Activated CD4-positive, alpha-beta memory T cell treated with anti-CD3 and anti-CD28 coated beads for 36 hours (primary cell): ENCODE measurements at regions of chr1 and their contacts with region 1.

Region 1: GRCh38 chr1:207885129-207886032 is 25.5 kb downstream of the CD34 start:
- DNase-seq: peak; percentile 83
- H3K4me3 Mint-ChIP-seq: no peak overlapping the region
- H3K27ac Mint-ChIP-seq: peak overlapping the region; percentile 90
- H3K4me1 Mint-ChIP-seq: peaks cover 30% of the 10 kb centered on the region
- H3K27me3 Mint-ChIP-seq: peaks cover 3% of the 10 kb centered on the region

Region 2: DNA sequence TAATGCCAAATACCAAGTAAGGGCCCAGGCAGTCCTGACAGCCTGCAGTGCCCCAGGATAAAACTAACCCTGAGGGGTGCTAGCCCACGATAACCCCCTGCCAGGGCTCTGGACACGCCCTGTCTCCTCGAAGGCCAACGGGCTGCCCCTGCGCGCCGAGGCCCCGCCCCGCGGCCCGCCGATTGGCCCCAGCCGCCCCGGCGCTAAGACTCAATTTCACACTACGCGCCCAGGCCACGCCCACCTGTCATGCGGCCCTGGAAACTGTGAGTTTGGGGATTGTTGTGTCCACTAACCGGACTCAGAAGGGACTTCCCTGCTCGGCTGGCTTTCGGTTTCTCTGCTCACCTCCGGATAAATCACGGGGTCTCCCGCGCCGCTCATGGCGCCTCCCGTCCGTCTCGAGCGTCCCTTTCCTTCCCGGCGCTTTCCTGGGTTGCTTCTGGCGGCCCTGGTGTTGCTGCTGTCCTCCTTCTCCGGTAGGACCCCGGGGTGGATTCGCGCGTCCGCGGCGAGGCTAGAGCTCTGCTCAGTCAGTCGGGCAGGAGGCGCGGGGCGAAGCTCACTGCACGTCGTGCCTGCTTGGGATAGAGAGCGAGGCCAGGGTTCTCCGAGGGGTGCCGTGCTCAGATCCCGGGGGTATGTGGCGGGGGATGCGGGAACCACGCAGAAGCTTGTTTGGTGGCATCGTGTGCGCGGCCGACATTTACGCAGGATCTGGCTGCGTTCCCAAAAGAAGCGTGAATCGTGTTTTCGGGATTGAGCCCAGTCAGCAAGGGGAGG is 240.3 kb before region 1 on chr1 and contains the start of gene CR1L:
- CTCF ChIA-PET with region 1: no interaction called
- POLR2A ChIA-PET with region 1: no interaction called
- intact Hi-C with region 1: no loop called
- DNase-seq: peak; percentile 86
- H3K4me3 Mint-ChIP-seq: peak within 1 kb of the TSS; percentile 62
- H3K27ac Mint-ChIP-seq: no peak within 1 kb of the TSS
- H3K4me1 Mint-ChIP-seq: peaks cover 7% of the 10 kb centered on the region
- H3K27me3 Mint-ChIP-seq: peaks cover 14% of the 10 kb centered on the region
- total RNA-seq, gene CR1L: not detected

Region 3: DNA sequence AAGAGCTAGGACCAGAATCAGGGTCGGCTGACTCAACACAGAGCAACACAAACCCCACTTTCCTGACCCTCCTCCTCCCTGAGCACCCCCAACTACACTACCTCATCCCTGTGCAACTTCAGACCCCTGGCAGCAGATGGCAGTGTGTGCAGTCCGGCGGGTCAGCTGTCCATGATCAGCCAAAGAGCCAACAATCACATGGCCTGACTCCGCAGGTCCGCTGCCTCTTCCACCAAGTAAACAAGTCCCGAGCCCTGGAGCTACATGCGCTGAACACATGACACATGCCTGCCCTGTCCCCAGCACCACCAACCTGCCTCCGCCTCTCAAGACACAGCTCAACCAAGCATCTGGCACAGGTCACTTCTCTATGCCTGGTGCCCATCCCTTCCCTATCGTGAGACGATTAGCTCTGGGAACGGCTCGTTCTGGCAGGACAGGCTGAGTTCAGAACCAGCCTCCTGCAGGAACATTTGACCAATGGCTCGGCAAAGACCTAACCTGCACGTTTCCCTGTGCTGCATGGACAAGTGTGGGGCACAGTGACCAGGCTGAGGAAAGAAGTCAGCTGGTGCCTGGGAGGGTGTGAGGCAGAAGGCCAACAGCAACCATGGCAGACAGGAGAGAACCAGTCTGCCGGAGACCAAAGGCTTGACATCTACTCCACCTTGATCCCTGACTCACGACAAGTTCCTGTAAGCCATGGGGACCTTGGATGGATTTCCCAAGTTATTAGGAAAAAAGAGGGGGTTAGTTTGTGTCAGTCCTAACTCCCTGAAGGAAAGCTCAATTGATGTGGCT is 73.3 kb before region 1 on chr1:
- CTCF ChIA-PET with region 1: interaction called, 15 read pairs
- POLR2A ChIA-PET with region 1: no interaction called
- intact Hi-C with region 1: no loop called
- DNase-seq: no peak
- H3K4me3 Mint-ChIP-seq: no peak overlapping the region
- H3K27ac Mint-ChIP-seq: peak overlapping the region; percentile 74
- H3K4me1 Mint-ChIP-seq: peaks cover 86% of the 10 kb centered on the region
- H3K27me3 Mint-ChIP-seq: no peaks in the 10 kb centered on the region

Region 4: DNA sequence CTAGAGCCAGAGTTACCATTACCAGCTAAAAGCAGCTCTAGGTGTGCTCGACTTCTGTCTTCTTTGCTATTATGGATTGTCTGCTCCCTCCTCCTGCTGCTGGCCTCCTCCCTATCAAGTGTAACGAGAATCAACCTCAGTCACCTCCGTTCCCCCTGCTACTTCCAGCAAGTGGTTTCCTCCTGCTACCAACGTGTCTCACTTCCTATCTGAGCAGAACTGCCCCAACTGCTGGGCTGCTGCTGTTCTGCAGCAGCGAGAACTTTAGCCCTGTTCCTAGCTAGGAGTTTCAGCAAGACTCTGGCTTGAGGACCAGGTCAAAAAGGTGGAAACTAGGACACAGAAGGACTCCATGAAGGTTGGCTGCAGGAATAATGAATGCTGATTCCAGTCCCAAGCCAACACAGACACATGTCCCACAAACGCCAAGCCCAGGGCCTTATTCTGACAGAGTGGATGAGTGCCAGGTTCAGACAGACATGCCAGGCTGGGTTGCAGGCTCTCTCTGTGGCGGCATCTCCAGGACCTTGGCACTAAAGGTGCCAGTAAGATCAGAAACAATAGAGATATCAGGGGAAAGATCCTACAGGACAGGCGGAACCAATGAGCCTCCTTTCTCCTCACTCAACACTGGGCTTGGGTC is 21.4 kb before region 1 on chr1:
- CTCF ChIA-PET with region 1: interaction called, 220 read pairs
- POLR2A ChIA-PET with region 1: interaction called, 16 read pairs
- intact Hi-C with region 1: loop called (anchors 2 kb)
- DNase-seq: peak; percentile 68
- H3K4me3 Mint-ChIP-seq: peak overlapping the region; percentile 6
- H3K27ac Mint-ChIP-seq: peak overlapping the region; percentile 83
- H3K4me1 Mint-ChIP-seq: peaks cover 64% of the 10 kb centered on the region
- H3K27me3 Mint-ChIP-seq: no peaks in the 10 kb centered on the region

Region 5: GRCh38 chr1:207903767-207904166 is 18.4 kb after region 1 on chr1:
- CTCF ChIA-PET with region 1: interaction called, 11 read pairs
- POLR2A ChIA-PET with region 1: no interaction called
- intact Hi-C with region 1: no loop called
- DNase-seq: no peak
- H3K4me3 Mint-ChIP-seq: no peak overlapping the region
- H3K27ac Mint-ChIP-seq: no peak overlapping the region
- H3K4me1 Mint-ChIP-seq: peaks cover 8% of the 10 kb centered on the region
- H3K27me3 Mint-ChIP-seq: peaks cover under 1% of the 10 kb centered on the region

Region 6: GRCh38 chr1:207952617-207953542 is 67.5 kb after region 1 on chr1:
- CTCF ChIA-PET with region 1: interaction called, 255 read pairs
- POLR2A ChIA-PET with region 1: no interaction called
- intact Hi-C with region 1: no loop called
- DNase-seq: no peak
- H3K4me3 Mint-ChIP-seq: no peak overlapping the region
- H3K27ac Mint-ChIP-seq: no peak overlapping the region
- H3K4me1 Mint-ChIP-seq: no peaks in the 10 kb centered on the region
- H3K27me3 Mint-ChIP-seq: peaks cover 29% of the 10 kb centered on the region

Region 7: GRCh38 chr1:208085655-208086515 is 200.5 kb after region 1 on chr1:
- CTCF ChIA-PET with region 1: interaction called, 3 read pairs
- POLR2A ChIA-PET with region 1: no interaction called
- intact Hi-C with region 1: loop called (anchors 2 kb)
- DNase-seq: no peak
- H3K4me3 Mint-ChIP-seq: peak overlapping the region; percentile 65
- H3K27ac Mint-ChIP-seq: peak overlapping the region; percentile 60
- H3K4me1 Mint-ChIP-seq: peaks cover 15% of the 10 kb centered on the region
- H3K27me3 Mint-ChIP-seq: no peaks in the 10 kb centered on the region